GM13977 (cell line): ENCODE measurements at regions of chr2 and their contacts with region 1.

Region 1: DNA sequence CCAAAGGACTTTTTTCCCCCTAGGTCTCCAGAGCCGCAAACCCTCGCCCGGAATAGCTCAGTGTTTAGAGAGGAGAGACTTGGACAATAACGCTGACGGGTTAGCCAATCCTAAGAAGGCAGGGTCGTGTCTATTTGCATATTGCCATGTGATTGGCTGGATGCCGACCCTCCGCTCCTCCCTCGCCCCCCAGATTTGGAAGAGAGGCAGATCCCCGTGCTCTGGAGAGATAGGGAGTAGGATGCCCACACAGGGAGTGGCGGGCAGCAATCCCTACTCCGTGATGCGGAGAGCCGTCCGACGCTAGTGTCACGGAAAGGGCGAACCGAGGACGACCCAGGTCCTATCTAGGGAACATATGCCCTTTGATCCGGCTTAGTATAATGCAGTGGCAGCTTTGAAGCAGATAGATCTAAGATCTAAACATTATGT is 1.4 kb downstream of the WNT6 start:
- DNase-seq: no peak
- CTCF ChIP-seq: no peak

Region 2: DNA sequence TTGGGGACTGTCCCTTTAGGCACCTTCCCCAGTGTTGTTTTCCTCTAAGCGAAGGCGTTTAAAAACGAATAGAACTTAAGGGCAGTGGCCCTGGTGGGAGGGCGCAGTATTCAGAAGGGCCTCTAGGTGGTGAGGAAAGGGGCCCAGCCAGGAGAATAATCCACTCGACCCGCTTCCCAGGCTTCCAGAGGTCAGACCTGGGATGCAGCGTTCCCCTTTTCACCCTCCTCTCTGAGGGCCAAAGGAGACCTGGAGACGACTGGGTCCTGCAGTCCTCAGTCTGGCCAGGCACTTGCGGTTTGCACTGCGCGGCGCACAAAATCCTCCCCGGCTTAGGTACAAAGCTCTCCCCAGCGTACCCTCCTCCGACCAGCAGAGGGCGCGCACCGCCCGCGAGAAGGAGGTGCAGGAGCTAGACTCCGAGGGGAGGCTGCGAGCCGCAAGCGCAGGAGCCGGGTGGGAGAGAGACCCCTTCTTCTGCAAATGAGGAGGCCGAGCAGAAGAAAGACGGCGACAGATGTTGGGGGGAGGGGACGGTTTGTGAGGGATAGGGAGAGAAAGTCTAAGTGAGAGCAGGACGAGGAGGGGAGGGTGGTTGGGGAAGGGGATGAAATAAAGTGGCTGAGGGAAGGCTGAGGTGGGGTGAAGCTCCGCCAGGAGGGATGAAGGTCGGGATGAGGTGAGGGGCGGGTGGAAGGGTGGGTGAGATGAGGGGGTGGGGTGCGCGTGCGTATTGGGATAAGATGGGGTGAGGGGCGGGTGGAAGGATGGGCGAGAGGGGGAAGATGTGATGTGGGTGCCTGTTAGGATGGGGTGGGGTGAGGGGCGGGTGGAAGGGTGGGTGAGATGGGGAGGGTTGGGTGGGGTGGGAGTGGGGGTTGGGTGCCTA is 119.1 kb after region 1 on chr2:
- in situ Hi-C with region 1: loop called (anchors 10 kb)
- DNase-seq: peak; percentile 89
- CTCF ChIP-seq: peak; percentile 96